ENCODE measurements at regions of chr12 and their contacts with region 1.

Region 1: DNA sequence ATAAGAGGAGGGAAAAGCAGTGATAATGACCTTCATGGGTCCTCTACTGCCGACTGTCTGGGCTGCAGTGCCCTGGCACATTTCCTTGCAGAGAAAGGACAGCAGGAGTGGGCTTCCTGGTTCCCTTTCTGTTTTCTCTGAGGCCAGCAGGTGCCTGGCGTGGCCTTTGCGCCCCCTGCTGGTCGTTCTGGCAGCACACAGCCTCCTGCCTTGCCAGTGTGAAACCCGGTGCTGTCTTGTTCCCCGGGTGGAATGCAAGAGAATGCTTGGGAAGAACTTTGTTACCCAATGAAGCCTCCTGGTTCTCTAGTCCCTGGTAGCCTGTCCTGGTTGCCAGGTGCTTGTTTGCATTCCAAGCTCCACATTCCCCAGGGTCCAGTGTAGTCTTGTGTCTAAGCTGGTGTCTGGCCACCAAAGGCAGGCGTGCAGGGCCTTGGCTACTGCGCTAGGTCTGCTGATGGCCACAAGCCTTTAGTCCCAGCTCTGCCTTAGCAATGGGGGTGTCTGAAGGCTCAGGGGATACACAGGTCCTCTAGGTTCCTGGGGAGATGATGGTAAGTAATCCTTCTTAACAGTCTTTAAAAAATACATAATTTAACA is 1392.4 kb upstream of the TMEM132C start:
- ATAC-seq: peak in 7 of 8 experiments; percentile 45 to 100 (median 80)
- H3K4me3 ChIP-seq: no peak overlapping the region
- H3K27ac ChIP-seq: no peak overlapping the region
- H3K4me1 ChIP-seq: no peaks in the 10 kb centered on the region

Region 2: DNA sequence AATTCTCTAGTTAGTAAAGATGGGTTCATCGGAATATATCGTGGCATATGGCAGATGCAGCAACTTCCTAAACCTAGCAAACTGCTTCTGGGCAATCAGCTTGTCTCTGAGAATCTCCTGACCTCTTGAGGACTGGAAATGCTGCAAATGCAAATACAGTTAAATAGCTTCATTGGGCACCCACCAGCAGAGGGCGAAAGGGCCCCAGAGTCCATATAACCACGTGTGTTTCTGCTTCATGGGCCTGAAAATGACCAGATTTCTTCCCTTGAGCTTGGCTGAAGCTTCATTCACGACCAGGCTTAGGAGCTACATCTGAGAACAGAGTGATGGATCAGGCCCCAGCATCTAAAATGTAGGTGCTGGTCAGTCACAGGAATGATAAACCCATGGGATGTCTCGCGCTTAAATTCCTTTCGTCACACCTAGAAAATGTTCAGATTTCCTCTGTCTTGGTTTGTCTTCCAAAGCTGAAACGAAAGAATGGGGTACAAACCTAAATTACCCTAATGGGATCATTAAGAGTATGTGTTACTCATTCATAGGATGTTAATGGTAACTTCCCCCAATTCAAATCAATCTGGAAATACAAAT is 90.1 kb before region 1 on chr12:
- in situ Hi-C with region 1: loop called in 1 of 9 experiments (anchors 10 kb)
- ATAC-seq: peak in 3 of 8 experiments; percentile 90 to 95 (median 94)
- H3K4me3 ChIP-seq: no peak overlapping the region
- H3K27ac ChIP-seq: no peak overlapping the region
- H3K4me1 ChIP-seq: no peaks in the 10 kb centered on the region

Measured in motor neuron (in vitro differentiated cells).